ENCODE measurements at regions of chr16 and their contacts with region 1.

Region 1: DNA sequence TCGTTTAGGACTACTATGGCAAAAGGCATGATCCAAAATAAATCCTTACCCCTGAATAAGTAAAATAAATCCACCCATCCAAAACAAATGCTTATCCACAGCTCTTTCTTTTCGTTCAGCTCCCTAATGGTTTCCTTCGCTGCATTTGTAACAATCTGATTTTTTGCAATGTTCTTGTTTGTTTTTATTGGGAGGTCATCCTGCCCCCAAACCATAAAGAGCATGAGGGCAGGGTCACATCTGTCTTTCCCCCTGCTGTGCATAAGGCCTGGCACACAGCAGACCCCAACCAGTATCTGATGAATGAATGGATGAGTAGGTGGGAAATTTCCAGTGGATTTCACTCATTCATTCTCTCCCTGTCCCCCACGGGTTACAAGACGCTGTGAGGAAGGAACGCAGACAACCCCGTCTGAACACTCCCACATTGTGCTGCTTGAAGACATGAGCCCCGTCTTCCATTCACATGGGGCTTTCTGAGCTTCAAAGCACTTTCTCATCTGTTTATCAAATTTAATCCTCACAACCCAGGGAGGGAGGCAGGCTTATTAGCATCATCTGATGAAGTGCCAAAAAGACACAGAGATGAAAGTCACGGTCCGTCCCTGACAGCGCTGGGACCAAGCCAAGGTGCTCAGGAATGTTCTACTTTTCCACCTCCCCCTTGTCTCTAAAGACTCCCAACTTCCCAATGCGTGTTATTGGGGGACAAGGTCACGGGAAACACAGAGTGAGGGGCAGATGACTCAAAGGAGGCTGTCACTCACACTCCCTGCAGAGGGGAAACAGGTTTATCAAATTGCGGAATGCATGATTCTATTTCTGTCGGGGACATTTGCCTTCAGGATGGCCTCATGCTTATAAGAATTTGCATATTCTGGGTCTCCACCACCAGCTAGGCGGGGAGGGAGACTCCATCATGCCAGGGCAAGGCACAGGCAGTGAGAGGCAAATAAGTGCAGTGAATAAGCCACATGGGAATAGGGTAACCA is 10.9 kb downstream of the XYLT1 start:
- DNase-seq: peak in 2 of 3 donors; percentile 32 to 71
- ATAC-seq: peak; percentile 76 to 90
- H3K4me3 ChIP-seq: no peak overlapping the region
- H3K27ac ChIP-seq: no peak overlapping the region
- H3K4me1 ChIP-seq: peaks cover 12% of the 10 kb centered on the region
- H3K27me3 ChIP-seq: no peaks in the 10 kb centered on the region

Region 2: DNA sequence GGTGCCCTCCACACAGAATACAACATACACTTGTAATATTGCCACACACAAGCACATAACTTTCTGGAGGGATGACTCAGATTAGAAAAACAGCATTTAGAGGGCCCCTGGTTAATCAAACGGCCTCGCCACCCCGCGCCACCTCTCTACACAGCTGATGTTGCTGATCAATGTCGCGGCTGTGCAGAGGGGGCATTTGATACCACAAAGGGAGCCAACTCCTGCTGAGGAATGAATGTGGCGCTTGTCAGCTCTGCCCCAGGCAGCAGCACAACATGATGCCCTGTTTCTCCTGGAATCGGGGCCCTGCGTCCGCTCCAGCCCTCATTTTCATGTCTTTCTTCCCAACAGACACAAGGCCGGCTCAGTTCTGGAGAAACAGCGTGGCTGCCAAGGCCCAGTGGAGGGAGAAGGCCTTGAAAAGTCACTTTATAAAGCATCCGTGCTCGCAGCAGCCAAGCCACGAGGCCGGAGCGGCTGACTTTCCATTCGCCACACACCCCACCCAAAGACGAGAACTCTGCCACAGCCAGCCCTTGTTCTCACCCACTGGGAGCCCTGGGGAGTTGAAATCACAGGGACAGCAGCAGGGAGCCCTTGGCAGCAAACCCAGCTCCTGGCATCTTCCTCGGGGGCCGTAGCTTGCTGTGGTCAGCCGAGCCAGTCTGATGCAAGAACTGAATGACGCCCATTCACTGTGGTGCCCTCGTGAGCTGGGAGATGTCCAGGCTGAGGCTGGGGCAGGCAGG is 54.7 kb before region 1 on chr16:
- intact Hi-C with region 1: loop called in 2 of 4 experiments (anchors 5 to 10 kb)
- DNase-seq: peak; percentile 91 to 94 (median 93)
- ATAC-seq: peak; percentile 93
- H3K4me3 ChIP-seq: no peak overlapping the region
- H3K27ac ChIP-seq: peak overlapping the region; percentile 84
- H3K4me1 ChIP-seq: peaks cover 7% of the 10 kb centered on the region
- H3K27me3 ChIP-seq: no peaks in the 10 kb centered on the region

Region 3: GRCh38 chr16:17607075-17607509 is 147.3 kb after region 1 on chr16:
- intact Hi-C with region 1: no loop called
- DNase-seq: no peak
- ATAC-seq: no peak
- H3K4me3 ChIP-seq: no peak overlapping the region
- H3K27ac ChIP-seq: no peak overlapping the region
- H3K4me1 ChIP-seq: no peaks in the 10 kb centered on the region
- H3K27me3 ChIP-seq: no peaks in the 10 kb centered on the region